ENCODE measurements at regions of chr3 and their contacts with region 1.

Region 1: DNA sequence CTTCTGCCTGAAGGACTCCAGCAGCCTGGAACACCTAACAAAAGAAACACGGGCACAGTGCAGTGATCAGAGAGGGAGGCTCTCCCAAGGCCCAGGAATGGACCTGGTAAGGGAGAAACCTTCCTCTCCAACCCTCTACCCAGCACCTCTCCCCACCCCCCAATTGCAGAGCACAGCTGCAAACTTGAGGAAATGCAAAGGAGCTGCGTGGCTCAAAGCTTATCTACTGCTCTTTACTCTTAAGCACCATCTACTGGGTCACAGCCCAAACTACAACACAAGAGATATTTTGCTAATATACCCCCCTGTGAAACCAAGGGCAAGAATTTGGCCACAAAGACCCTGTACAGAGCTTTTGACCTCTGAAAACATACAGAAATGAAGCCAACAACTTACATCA is 328.3 kb downstream of the OXSM start:
- DNase-seq: no peak
- ATAC-seq: peak in 1 of 2 donors; percentile 77
- H3K4me3 ChIP-seq: no peak overlapping the region
- H3K27ac ChIP-seq: no peak overlapping the region
- H3K4me1 ChIP-seq: no peaks in the 10 kb centered on the region
- H3K27me3 ChIP-seq: no peaks in the 10 kb centered on the region
- CTCF ChIP-seq: peak in 3 of 5 experiments; percentile 52 to 65 (median 60)
- POLR2A ChIP-seq: no peak

Region 2: DNA sequence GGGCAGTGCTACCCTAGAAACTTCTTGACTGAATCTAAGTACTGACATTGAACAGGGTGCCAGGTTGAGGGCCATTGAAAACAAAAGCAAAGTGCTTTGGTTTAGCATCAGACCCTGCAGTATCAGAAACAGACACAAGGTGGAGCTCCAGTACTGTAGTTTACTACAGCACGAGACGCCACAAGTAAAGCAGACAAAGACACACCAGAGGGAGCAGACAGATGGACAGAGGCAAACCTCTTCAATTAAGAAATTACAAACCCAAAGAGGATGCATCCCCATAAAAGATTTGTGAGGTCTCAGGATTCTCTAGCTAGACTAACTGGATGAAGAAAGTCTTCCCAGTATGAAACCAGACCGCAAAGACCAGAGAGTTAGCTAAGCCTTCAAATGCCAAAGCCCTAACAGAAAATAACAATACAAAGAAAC is 470.0 kb before region 1 on chr3:
- in situ Hi-C with region 1: loop called in 2 of 4 experiments (anchors 25 kb)
- intact Hi-C with region 1: loop called (anchors 10 kb)
- DNase-seq: peak; percentile 33 to 55
- ATAC-seq: peak; percentile 80 to 97
- H3K4me3 ChIP-seq: no peak overlapping the region
- H3K27ac ChIP-seq: no peak overlapping the region
- H3K4me1 ChIP-seq: peaks cover 17 to 20% of the 10 kb centered on the region in 2 donors
- H3K27me3 ChIP-seq: no peaks in the 10 kb centered on the region
- CTCF ChIP-seq: peak; percentile 66 to 91 (median 85)
- POLR2A ChIP-seq: no peak

Region 3: DNA sequence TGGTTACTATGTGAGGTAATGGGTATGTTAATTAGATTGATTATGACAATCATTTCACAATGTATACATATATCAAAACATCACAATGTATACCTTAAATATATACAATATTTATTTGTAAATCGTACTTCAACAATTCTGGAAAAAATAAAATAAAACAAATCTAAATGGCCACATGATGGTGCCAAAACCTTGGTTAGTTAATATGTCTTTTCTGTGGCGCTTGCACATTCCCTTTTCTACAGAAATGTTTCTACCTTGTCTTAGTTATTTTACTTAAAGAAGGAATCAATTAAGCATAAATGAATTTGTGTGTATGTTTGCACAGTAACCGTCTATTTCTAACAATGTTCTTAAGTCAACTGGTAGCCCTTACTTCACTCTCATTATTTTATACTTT is 274.8 kb before region 1 on chr3:
- in situ Hi-C with region 1: no loop called
- intact Hi-C with region 1: loop called (anchors 5 kb)
- DNase-seq: no peak
- ATAC-seq: no peak
- H3K4me3 ChIP-seq: no peak overlapping the region
- H3K27ac ChIP-seq: no peak overlapping the region
- H3K4me1 ChIP-seq: no peaks in the 10 kb centered on the region
- H3K27me3 ChIP-seq: no peaks in the 10 kb centered on the region
- CTCF ChIP-seq: peak in 3 of 5 experiments; percentile 11 to 41 (median 21)
- POLR2A ChIP-seq: no peak

Region 4: GRCh38 chr3:25904206-25904605 is 214.0 kb before region 1 on chr3:
- in situ Hi-C with region 1: loop called in 2 of 4 experiments (anchors 5 to 25 kb)
- intact Hi-C with region 1: no loop called
- DNase-seq: no peak
- ATAC-seq: peak in 1 of 2 donors; percentile 52
- H3K4me3 ChIP-seq: no peak overlapping the region
- H3K27ac ChIP-seq: no peak overlapping the region
- H3K4me1 ChIP-seq: no peaks in the 10 kb centered on the region
- H3K27me3 ChIP-seq: no peaks in the 10 kb centered on the region
- CTCF ChIP-seq: peak in 3 of 5 experiments; percentile 43 to 48 (median 47)
- POLR2A ChIP-seq: no peak

Region 5: DNA sequence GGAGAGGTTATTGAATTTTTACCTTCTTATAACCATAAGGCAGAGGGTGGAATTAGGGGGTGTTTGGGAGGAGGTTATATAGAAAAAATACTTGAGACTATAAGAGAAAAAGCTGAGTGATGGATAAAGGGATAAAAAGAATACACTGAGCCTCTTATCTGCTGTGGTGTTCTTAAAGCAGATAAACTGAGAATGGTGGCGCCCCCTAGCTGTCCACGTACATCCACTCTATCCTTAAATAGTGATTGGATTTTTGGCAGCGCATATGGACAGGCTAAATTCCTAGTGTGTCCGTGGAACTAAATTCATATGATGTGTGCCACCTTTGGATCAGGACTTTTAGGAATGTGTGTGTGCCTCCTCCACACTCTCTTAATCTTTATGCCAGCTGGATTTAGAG is 207.2 kb before region 1 on chr3:
- in situ Hi-C with region 1: loop called in 1 of 4 experiments (anchors 25 kb)
- intact Hi-C with region 1: no loop called
- DNase-seq: no peak
- ATAC-seq: no peak
- H3K4me3 ChIP-seq: no peak overlapping the region
- H3K27ac ChIP-seq: no peak overlapping the region
- H3K4me1 ChIP-seq: no peaks in the 10 kb centered on the region
- H3K27me3 ChIP-seq: no peaks in the 10 kb centered on the region
- CTCF ChIP-seq: no peak
- POLR2A ChIP-seq: no peak